Adrenal gland (tissue), 19 donors: ENCODE measurements at regions of chr11 and their contacts with region 1.

Region 1: DNA sequence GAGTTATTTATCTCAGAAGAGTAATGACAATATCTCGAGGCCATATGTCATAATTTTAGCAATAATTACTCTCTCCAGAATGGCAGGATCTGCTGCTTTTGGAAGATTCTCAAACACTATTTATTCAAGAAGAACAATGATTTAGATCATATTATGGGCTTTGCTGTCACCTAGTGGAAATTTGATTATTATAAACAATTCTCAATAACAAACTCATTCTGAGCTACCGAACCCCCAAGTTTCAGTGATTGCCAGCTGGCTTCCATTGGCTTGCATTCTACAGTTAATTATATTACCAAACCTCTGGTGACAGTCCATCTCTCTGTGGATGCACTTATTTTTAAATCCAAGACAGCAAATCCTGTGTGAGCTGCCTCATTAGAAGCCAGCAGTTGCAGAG is 27.9 kb upstream of the SLC36A4 start:
- DNase-seq: no peak
- H3K4me3 ChIP-seq: no peak overlapping the region
- H3K27ac ChIP-seq: no peak overlapping the region
- H3K4me1 ChIP-seq: no peaks in the 10 kb centered on the region
- H3K27me3 ChIP-seq: no peaks in the 10 kb centered on the region
- CTCF ChIP-seq: peak; percentile 17 to 64 (median 52)
- POLR2A ChIP-seq: no peak

Region 2: DNA sequence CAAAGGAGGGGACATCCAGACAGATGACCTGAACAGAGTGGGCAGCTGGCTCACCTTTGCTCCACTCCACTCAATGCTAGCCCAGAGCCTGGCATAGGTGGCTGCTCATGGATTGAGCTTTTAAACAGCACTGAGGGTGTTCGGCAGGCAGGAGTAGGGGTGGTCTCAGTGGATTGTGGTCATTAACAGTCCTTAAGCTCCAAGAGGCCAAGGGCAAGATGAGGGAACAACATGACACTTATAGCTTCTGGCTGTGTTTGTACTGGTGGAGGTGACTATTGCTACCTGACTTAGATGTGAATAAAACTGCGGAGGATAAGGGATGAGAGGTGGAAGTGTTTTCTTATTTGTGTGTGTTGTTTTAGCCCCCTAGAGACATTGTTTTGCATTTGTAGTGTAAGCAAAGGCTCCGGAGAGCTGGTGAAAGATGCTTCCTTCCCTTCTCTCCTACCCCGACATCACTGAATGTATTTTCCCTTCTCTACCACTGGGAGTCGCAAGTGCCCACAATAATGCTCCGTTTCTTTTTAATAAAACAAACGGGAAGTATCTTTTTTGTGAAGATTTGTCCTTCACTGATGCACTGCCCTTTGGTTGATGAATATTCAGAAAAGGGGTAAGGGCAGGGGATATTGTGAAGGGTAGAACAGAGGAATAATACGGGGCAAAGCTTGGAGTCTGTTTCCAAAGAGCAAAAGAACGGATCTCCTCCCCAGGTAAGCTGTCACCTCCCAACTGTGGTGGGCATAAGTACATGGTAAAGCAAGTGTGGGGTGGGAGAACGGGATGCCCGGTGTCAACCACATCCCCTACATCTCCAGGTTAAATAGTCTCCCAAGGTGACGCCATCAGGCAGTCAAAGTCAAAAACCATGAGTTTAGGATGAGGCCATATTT is 283.7 kb before region 1 on chr11:
- intact Hi-C with region 1: loop called (anchors 5 kb)
- DNase-seq: peak in 5 of 7 donors; percentile 13 to 42 (median 23)
- H3K4me3 ChIP-seq: no peak overlapping the region
- H3K27ac ChIP-seq: no peak overlapping the region
- H3K4me1 ChIP-seq: no peaks in the 10 kb centered on the region
- H3K27me3 ChIP-seq: no peaks in the 10 kb centered on the region
- CTCF ChIP-seq: peak; percentile 58 to 85 (median 74)
- POLR2A ChIP-seq: no peak